ENCODE measurements at regions of chr2 and their contacts with region 1.

Region 1: DNA sequence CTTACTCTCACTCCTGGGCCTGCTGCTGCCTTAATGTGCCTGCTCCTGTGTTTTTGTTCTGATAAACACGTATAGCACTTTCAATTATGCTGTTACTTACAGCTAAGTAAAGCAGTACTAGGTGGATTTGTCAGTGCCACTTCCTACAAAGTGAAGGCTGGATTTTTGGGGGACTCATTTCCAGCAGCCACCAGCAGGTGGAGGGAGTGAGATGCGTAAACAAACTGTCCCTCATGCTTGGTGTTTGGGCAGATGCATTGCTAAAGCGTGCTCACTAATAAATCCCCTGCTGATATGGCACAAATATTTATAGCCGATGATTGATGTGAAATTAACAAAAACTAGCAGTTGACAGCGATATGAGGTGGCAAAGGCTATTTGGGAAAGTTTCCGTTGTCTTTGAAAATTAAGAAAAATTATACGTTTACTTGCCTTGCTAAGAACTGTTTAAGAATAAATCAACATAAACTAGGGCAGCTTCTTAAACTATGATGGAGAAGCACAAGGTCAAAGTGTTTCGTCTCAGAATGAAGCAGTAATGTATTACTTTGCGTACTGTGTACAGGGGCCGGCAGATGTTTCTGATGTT is 101.7 kb downstream of the AGAP1 start:
- DNase-seq: peak; percentile 88

Region 2: DNA sequence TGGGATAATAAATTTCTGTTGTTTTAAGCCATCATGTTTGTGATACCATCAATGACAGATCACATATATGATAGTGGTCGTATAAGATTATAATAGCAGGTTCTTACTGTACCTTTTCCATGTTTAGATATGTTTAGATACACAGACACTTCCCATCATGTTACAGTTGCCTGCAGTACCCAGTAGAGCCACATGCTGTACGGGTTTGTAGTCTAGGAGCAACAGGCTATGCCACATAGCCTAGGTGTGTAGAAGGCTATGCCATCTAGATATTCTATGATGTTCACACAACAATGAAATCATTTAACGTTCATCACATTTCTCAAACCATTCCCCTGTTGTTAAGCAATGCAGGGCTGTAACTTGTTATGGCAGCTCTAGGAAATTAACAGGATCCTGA is 776.6 kb before region 1 on chr2:
- intact Hi-C with region 1: no loop called
- DNase-seq: no peak

Region 3: GRCh38 chr2:234905547-234906265 is 689.8 kb before region 1 on chr2:
- intact Hi-C with region 1: no loop called
- DNase-seq: no peak

Region 4: GRCh38 chr2:235135990-235136561 is 459.4 kb before region 1 on chr2:
- intact Hi-C with region 1: loop called (anchors 5 kb)
- DNase-seq: peak; percentile 88

Region 5: DNA sequence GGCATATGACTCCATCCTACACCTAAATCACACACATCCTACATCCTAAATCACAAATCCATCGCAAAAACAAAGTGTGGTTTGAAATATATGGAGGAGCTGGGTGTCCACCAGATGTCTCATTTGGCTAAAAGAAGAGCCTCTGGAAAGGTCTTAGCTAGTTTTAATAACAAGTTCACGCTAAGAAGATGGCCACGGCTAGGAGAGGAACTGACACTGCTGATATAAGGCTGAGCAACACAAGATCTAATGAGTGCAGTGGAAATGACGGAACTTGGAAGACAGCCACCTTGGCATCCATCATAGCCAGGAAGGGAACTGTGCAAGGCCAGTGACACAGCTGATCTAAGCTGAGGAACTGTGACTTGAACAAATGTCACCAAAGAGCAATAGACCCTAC is 161.7 kb before region 1 on chr2:
- intact Hi-C with region 1: loop called in 1 of 2 experiments (anchors 10 kb)
- DNase-seq: peak; percentile 83

Region 6: GRCh38 chr2:235642446-235643098 is 47.1 kb after region 1 on chr2:
- intact Hi-C with region 1: no loop called
- DNase-seq: peak; percentile 85

Region 7: DNA sequence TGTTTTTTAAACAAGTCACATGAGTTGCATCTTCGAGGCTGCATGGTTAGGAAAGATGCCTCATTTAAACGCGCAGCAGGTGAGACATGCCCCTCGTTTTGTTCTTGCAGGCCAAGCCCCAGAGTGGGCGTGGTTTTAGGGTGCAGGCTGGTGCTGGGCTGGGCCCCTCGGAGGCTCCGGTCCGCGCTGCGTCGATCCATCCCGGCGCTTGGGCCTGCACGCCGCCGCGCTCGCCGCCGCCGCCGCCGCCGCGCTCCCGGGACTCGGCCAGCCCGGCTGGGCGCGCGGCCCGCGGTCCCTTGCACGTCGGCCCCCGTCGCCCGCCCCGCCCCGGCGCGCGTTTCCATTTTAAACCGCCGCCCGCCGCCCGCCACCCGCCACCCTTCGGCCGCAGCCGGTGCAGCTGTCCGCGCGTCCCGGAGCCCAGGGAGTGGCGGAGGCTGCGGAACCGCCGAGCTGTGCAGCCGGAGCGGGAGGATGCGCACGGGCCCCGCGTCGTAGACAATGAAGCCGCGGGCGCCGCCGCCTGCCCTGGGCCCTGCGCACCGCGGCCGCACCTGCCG is 73.8 kb after region 1 on chr2:
- intact Hi-C with region 1: loop called (anchors 5 to 10 kb)
- DNase-seq: peak; percentile 89

Region 8: DNA sequence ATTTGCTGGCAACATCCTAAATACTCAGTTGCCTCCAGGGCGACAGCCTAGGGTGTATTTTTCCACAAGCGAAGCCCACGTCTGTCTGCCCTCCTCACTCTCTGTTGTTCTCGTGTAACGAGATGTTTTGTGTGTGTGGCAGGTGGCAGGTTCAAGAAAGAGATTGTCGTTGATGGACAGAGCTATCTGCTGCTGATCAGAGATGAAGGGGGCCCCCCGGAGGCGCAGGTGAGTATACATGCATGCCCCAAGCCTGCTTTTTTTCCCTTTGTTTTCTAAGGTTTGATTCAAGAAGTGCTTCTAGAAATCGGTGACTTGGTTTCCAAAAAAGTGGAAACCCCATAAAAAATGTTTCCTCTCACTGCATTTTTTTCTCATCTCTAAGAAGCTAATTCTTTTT is 145.3 kb after region 1 on chr2:
- intact Hi-C with region 1: loop called (anchors 2 to 5 kb)
- DNase-seq: no peak

Region 9: DNA sequence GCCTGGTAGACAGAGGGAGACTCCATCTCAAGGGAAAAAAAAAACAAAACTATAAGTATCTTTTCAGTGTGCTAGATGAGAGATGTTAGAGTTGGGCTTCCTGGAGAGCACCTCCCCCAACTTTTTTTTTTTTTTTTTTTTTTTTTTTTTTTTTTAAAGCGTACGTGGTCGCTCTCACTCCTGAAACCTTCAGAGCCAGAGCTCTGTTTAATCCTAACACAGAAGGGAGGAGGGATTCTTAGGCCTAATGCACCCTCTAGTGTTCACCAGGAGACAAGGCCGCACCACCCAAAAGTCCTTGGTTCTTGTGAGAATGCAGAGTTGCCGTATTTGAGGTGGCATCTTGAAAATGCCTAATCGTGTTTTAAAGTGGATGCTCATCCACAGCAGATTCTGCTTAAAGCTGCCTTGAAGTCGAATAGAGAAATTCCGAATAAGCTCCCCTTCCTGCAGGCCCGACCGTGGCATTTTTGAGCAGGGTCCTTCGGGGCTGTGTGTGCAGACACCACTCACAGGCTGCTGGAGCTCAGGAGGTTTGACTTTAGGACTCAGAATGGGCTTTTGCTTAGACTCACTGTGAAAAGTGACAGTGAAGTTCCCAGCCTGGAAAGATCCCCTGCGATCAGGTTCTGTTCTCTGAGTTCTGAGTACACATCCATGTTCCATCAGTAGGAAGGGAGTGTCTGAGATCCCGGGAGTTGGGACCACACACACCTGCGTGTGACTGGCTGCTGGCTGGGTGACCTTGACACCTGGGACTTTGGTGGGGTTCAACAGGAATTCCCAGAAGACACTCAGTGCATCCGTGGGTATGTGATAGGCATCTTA is 151.0 kb after region 1 on chr2:
- intact Hi-C with region 1: loop called (anchors 2 to 5 kb)
- DNase-seq: no peak

Region 10: GRCh38 chr2:235958221-235958931 is 362.9 kb after region 1 on chr2:
- intact Hi-C with region 1: no loop called
- DNase-seq: no peak